PC-9 (cell line): ENCODE measurements at regions of chr14 and their contacts with region 1.

Region 1: GRCh38 chr14:24392325-24393091 is 6.3 kb upstream of the NYNRIN start:
- DNase-seq: peak; percentile 49 to 90
- H3K4me3 ChIP-seq: peak overlapping the region; percentile 55; the same call in 1 of the 2 replicates
- H3K27ac ChIP-seq: peak overlapping the region; percentile 100
- H3K4me1 ChIP-seq: peaks cover 36% of the 10 kb centered on the region
- H3K27me3 ChIP-seq: no peaks in the 10 kb centered on the region
- CTCF ChIP-seq: peak; percentile 51

Region 2: GRCh38 chr14:24431569-24432258 is 39.2 kb after region 1 on chr14:
- CTCF ChIA-PET with region 1: no interaction called
- POLR2A ChIA-PET with region 1: interaction called, 11 read pairs
- intact Hi-C with region 1: loop called (anchors 2 kb)
- DNase-seq: peak; percentile 75 to 85
- H3K4me3 ChIP-seq: peak overlapping the region; percentile 64; the same call in 1 of the 2 replicates
- H3K27ac ChIP-seq: no peak overlapping the region
- H3K4me1 ChIP-seq: peaks cover 9% of the 10 kb centered on the region
- H3K27me3 ChIP-seq: no peaks in the 10 kb centered on the region
- CTCF ChIP-seq: peak; percentile 92